ENCODE measurements at regions of chr2 and their contacts with region 1.

Region 1: GRCh38 chr2:219119422-219120043 is 41.1 kb downstream of the NHEJ1 start:
- DNase-seq: peak; percentile 86
- H3K4me3 Mint-ChIP-seq: no peak overlapping the region
- H3K27ac Mint-ChIP-seq: no peak overlapping the region
- H3K4me1 Mint-ChIP-seq: peaks cover 8% of the 10 kb centered on the region
- H3K27me3 Mint-ChIP-seq: no peaks in the 10 kb centered on the region

Region 2: DNA sequence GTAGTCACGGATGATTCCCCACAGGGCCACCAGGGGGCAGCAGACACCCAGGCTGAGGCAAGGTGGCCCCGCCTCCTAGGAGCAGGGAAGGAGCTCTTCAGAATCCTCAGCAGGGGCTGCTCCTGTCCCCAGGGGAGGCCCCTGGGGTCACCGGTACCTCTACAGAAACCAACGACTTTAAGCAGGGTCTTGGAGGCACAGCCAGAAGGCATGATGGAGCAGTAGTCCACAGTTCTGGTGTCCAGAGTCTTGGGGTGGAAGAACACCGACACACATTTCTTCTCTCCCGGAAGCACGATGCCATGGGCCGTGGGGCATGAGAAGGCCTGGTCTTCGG is 89.7 kb before region 1 on chr2:
- intact Hi-C with region 1: loop called (anchors 1 kb)
- DNase-seq: peak; percentile 93
- H3K4me3 Mint-ChIP-seq: no peak overlapping the region
- H3K27ac Mint-ChIP-seq: no peak overlapping the region
- H3K4me1 Mint-ChIP-seq: no peaks in the 10 kb centered on the region
- H3K27me3 Mint-ChIP-seq: peaks cover 13% of the 10 kb centered on the region

Region 3: GRCh38 chr2:219073413-219074129 is 46.0 kb before region 1 on chr2:
- intact Hi-C with region 1: loop called (anchors 1 kb)
- DNase-seq: peak; percentile 64
- H3K4me3 Mint-ChIP-seq: no peak overlapping the region
- H3K27ac Mint-ChIP-seq: no peak overlapping the region
- H3K4me1 Mint-ChIP-seq: no peaks in the 10 kb centered on the region
- H3K27me3 Mint-ChIP-seq: no peaks in the 10 kb centered on the region

Region 4: DNA sequence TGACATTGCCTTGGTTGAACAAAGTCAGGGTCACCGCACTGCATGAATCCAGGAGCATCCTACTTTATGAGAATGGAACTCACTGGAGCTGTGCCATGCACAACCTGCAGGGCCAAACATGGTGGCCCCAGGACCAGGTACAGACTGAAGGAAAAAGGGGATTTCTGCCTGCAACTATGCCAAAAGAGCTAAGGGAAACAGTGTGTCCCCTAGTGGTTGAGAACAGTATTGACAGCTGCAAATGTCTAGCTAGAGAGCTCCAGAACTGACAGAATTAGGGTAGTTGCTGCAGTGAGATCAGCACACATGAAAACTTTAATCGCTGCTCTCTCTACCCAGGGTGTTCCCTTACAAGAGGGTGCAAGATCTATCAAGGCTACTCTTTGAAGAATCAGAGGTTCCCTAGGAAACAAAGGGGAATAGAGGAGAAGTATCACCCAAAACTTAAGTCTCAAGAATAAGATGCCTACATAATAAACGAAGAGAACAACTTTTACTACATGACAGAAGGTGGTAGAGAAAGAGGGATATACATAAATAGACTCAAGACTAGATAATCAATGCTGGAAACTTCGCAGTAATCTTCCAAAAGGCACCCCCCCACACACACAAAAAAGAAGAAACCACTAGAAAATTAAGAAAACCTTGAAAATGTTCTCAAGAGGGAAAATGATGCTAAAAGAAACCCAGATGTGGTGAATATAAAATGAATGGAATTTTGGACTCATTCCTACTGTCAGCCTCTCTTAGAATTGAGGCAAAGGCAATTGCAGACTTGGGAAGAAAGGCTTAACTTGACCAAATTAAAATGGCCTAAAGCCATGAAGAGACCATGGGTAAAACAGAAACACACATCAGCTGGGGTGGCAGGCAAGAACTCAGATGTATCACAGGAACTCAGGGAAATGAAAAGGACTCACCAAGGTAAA is 15.2 kb before region 1 on chr2:
- intact Hi-C with region 1: no loop called
- DNase-seq: peak; percentile 74
- H3K4me3 Mint-ChIP-seq: peak overlapping the region; percentile 7
- H3K27ac Mint-ChIP-seq: peak overlapping the region; percentile 26
- H3K4me1 Mint-ChIP-seq: peaks cover 15% of the 10 kb centered on the region
- H3K27me3 Mint-ChIP-seq: no peaks in the 10 kb centered on the region

Region 5: DNA sequence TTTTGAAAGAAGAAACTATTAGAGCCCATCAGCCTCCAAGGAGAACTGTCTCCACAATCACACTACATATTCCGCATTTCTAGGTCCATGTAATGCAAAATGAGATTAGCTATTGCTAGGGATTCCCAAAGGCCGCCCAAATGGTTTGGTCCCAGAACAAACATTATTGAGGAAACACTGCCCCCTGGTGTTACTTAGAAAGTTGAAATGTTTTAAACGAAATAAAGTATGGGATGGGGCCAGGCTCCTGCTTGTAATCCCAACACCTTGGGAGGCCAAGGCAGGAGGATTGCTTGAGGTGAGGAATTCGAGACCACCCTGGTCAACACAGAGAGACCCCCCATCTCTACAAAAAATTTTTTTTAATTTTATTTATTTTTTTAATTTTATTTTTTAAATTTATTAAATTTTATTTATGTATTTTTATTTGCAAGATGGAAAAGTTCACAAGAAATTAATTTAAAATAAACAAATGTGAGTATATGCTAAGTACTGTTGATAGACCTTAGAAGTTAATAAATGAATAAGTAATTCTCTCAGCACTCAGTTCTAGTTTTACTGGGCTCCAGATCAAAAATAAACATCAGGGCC is 35.6 kb after region 1 on chr2:
- intact Hi-C with region 1: loop called (anchors 2 kb)
- DNase-seq: peak; percentile 84
- H3K4me3 Mint-ChIP-seq: no peak overlapping the region
- H3K27ac Mint-ChIP-seq: no peak overlapping the region
- H3K4me1 Mint-ChIP-seq: peaks cover 8% of the 10 kb centered on the region
- H3K27me3 Mint-ChIP-seq: no peaks in the 10 kb centered on the region

Measured in activated CD4-positive, alpha-beta T cell treated with anti-CD3 and anti-CD28 coated beads, Interleukin-2, amount 10 ng/mL, durations not matched to agents 24 days and 14 days (primary cell).